ENCODE measurements at regions of chr14 and their contacts with region 1.

Region 1: GRCh38 chr14:63727774-63728728 is at the start of gene SGPP1:
- DNase-seq: peak; percentile 81 to 86 (median 83)
- H3K4me3 ChIP-seq: peak within 1 kb of the TSS; percentile 57 to 80
- H3K4me3 Mint-ChIP-seq: peak within 1 kb of the TSS; percentile 98 to 100 (median 99)
- H3K27ac ChIP-seq: peak within 1 kb of the TSS; percentile 68
- H3K27ac Mint-ChIP-seq: peak within 1 kb of the TSS; percentile 86 to 98 (median 97)
- H3K4me1 ChIP-seq: peaks cover 31% of the 10 kb centered on the region
- H3K4me1 Mint-ChIP-seq: peaks cover 25 to 53% (median 43%) of the 10 kb centered on the region in 4 donors
- H3K27me3 ChIP-seq: no peaks in the 10 kb centered on the region
- H3K27me3 Mint-ChIP-seq: no peaks in the 10 kb centered on the region
- total RNA-seq, gene SGPP1: 12.2 to 12.4 TPM

Region 2: GRCh38 chr14:63510538-63510937 is 217.5 kb before region 1 on chr14:
- CTCF ChIA-PET with region 1: no interaction called
- POLR2A ChIA-PET with region 1: no interaction called
- intact Hi-C with region 1: no loop called
- DNase-seq: peak in 4 of 5 donors; percentile 9 to 43 (median 10)
- H3K4me3 ChIP-seq: no peak overlapping the region
- H3K4me3 Mint-ChIP-seq: peak overlapping the region in 6 of 8 donors; percentile 18 to 88 (median 64)
- H3K27ac ChIP-seq: no peak overlapping the region
- H3K27ac Mint-ChIP-seq: peak overlapping the region; percentile 33 to 91 (median 84)
- H3K4me1 ChIP-seq: peaks cover 60% of the 10 kb centered on the region
- H3K4me1 Mint-ChIP-seq: peaks cover 53 to 66% (median 58%) of the 10 kb centered on the region in 4 donors
- H3K27me3 ChIP-seq: no peaks in the 10 kb centered on the region
- H3K27me3 Mint-ChIP-seq: no peaks in the 10 kb centered on the region

Region 3: GRCh38 chr14:63641473-63642228 is 86.4 kb before region 1 on chr14 and contains the start of gene WDR89:
- CTCF ChIA-PET with region 1: interaction called, 7 read pairs
- POLR2A ChIA-PET with region 1: interaction called, 43 read pairs
- intact Hi-C with region 1: loop called (anchors 1 kb)
- DNase-seq: peak; percentile 96 to 99 (median 98)
- H3K4me3 ChIP-seq: peak within 1 kb of the TSS; percentile 85 to 96
- H3K4me3 Mint-ChIP-seq: peak within 1 kb of the TSS; percentile 85 to 98 (median 92)
- H3K27ac ChIP-seq: peak within 1 kb of the TSS; percentile 99
- H3K27ac Mint-ChIP-seq: peak within 1 kb of the TSS; percentile 90 to 99 (median 97)
- H3K4me1 ChIP-seq: peaks cover 37% of the 10 kb centered on the region
- H3K4me1 Mint-ChIP-seq: peaks cover 22 to 49% (median 33%) of the 10 kb centered on the region in 4 donors
- H3K27me3 ChIP-seq: no peaks in the 10 kb centered on the region
- H3K27me3 Mint-ChIP-seq: no peaks in the 10 kb centered on the region
- total RNA-seq, gene WDR89: 32.8 to 36.3 TPM

Region 4: DNA sequence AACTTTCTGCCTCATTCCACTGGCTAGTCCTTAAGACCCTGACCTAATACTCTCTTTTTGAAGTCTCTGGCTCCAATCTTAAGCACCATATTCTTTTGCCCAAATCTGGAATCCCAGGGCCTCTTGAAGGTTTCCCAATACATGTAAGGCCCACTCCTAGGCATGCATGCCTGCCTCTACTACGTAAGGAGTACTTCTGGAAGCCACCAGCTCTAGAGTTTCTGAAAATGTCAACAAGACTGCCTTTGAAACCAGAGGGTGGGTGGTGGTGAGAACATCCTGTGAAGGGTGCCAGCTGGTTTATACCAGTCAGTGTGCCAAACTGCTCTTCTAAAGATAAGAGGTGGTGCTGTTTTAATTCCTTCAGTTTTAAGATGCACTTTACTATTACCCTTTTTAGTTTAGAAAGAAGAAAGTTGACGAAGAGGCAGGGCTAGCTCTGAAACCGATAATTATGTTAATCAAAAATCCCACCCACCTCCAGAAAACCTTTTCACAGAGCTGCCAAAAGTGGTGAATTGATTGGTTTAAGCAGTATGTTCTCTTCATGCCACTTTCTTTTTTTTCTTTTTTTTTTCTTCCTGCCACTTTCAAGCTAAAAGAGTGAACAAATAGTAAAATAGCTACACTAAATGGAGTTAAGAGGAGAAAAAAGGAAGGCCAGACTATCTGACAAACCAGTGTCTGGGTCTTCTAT is 77.6 kb before region 1 on chr14:
- CTCF ChIA-PET with region 1: interaction called, 19 read pairs
- POLR2A ChIA-PET with region 1: interaction called, 34 read pairs
- intact Hi-C with region 1: loop called (anchors 2 kb)
- DNase-seq: peak; percentile 72 to 79 (median 74)
- H3K4me3 ChIP-seq: peak overlapping the region in 1 of 2 donors; percentile 1
- H3K4me3 Mint-ChIP-seq: peak overlapping the region in 7 of 8 donors; percentile 66 to 80 (median 77)
- H3K27ac ChIP-seq: peak overlapping the region; percentile 56
- H3K27ac Mint-ChIP-seq: peak overlapping the region; percentile 92 to 100 (median 97)
- H3K4me1 ChIP-seq: peaks cover 41% of the 10 kb centered on the region
- H3K4me1 Mint-ChIP-seq: peaks cover 19 to 39% (median 29%) of the 10 kb centered on the region in 4 donors
- H3K27me3 ChIP-seq: no peaks in the 10 kb centered on the region
- H3K27me3 Mint-ChIP-seq: no peaks in the 10 kb centered on the region

Region 5: GRCh38 chr14:65281991-65282895 is 1554.2 kb after region 1 on chr14:
- CTCF ChIA-PET with region 1: no interaction called
- POLR2A ChIA-PET with region 1: no interaction called
- intact Hi-C with region 1: no loop called
- DNase-seq: peak in 4 of 5 donors; percentile 9 to 23 (median 18)
- H3K4me3 ChIP-seq: peak overlapping the region; percentile 25 to 30
- H3K4me3 Mint-ChIP-seq: peak overlapping the region; percentile 72 to 90 (median 84)
- H3K27ac ChIP-seq: peak overlapping the region; percentile 36
- H3K27ac Mint-ChIP-seq: peak overlapping the region; percentile 79 to 96 (median 94)
- H3K4me1 ChIP-seq: peaks cover 30% of the 10 kb centered on the region
- H3K4me1 Mint-ChIP-seq: peaks cover 26 to 48% (median 30%) of the 10 kb centered on the region in 4 donors
- H3K27me3 ChIP-seq: no peaks in the 10 kb centered on the region
- H3K27me3 Mint-ChIP-seq: no peaks in the 10 kb centered on the region